ENCODE measurements at regions of chr17 and their contacts with region 1.

Region 1: GRCh38 chr17:32311028-32311536 is 30.9 kb downstream of the C17orf75 start:
- DNase-seq: no peak
- ATAC-seq: peak; percentile 63; the same call in 1 of the 2 replicates
- H3K4me3 ChIP-seq: no peak overlapping the region
- H3K27ac ChIP-seq: no peak overlapping the region
- H3K4me1 ChIP-seq: 0 out of 2 replicates have a peak, but pooled peaks cover 4% of the 10 kb centered on the region
- H3K27me3 ChIP-seq: no peaks in the 10 kb centered on the region
- CTCF ChIP-seq: no peak

Region 2: GRCh38 chr17:32102172-32102863 is 208.8 kb before region 1 on chr17:
- CTCF ChIA-PET with region 1: interaction called, 11 read pairs
- POLR2A ChIA-PET with region 1: no interaction called
- in situ Hi-C with region 1: no loop called
- intact Hi-C with region 1: no loop called
- DNase-seq: no peak
- ATAC-seq: no peak
- H3K4me3 ChIP-seq: no peak overlapping the region
- H3K27ac ChIP-seq: peak overlapping the region; percentile 67; the same call in 1 of the 2 replicates
- H3K4me1 ChIP-seq: peaks cover 23% of the 10 kb centered on the region
- H3K27me3 ChIP-seq: no peaks in the 10 kb centered on the region
- CTCF ChIP-seq: no peak

Region 3: DNA sequence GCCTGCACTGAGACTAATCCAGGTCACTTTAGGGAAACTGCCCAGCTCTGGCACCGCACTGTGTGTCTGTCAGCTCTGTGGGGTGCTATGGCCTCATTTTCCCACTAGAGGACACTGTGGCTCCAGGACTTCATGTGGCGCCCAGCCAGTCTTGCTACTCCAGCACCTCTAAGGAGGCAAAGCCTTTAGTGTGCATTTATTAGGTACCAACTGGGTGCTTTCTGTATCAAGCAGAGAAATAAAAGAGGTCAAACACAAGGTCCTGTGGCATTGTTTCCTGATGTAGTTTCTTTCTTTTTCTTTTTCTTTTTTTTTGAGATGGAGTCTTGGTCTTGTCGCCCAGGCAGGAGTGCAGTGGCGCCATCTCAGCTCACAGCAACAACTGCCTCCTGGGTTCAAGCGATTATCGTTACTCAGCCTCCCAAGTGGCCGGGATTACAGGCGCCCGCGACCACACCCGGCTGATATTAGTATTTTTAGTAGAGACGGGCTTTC is 57.9 kb before region 1 on chr17:
- CTCF ChIA-PET with region 1: interaction called, 14 read pairs
- POLR2A ChIA-PET with region 1: interaction called, 7 read pairs
- in situ Hi-C with region 1: no loop called
- intact Hi-C with region 1: no loop called
- DNase-seq: peak; percentile 67
- ATAC-seq: peak; percentile 98
- H3K4me3 ChIP-seq: no peak overlapping the region
- H3K27ac ChIP-seq: no peak overlapping the region
- H3K4me1 ChIP-seq: no peaks in the 10 kb centered on the region
- H3K27me3 ChIP-seq: no peaks in the 10 kb centered on the region
- CTCF ChIP-seq: peak; percentile 99

Region 4: DNA sequence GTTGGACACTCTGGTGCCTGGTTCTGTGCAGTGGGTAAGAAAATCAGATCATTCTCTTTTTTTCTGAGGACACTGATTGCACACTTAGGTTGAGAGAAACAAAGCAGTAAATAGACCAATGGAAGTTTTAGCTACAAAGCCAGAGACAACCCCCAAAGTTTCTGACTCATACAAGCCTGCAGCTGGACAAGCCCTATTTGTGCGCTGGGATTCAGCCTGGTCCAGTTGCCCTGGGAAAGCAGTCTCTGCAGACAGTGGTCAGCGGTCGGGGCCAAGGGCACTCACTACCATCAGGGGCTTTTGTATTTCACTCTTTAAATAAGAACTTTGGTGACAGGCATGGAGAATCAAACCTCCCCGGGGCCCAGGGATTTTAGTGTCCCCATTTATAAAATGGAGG is 51.5 kb before region 1 on chr17:
- CTCF ChIA-PET with region 1: interaction called, 14 read pairs
- POLR2A ChIA-PET with region 1: interaction called, 11 read pairs
- in situ Hi-C with region 1: no loop called
- intact Hi-C with region 1: no loop called
- DNase-seq: no peak
- ATAC-seq: no peak
- H3K4me3 ChIP-seq: no peak overlapping the region
- H3K27ac ChIP-seq: no peak overlapping the region
- H3K4me1 ChIP-seq: no peaks in the 10 kb centered on the region
- H3K27me3 ChIP-seq: 0 out of 2 replicates have a peak, but pooled peaks cover 3% of the 10 kb centered on the region
- CTCF ChIP-seq: no peak

Region 5: GRCh38 chr17:32266389-32267301 is 44.4 kb before region 1 on chr17:
- CTCF ChIA-PET with region 1: interaction called, 11 read pairs
- POLR2A ChIA-PET with region 1: no interaction called
- in situ Hi-C with region 1: no loop called
- intact Hi-C with region 1: no loop called
- DNase-seq: no peak
- ATAC-seq: 0 out of 2 replicates have a peak, but pooled peaks have one; percentile 11
- H3K4me3 ChIP-seq: peak overlapping the region; percentile 46 to 47
- H3K27ac ChIP-seq: no peak overlapping the region
- H3K4me1 ChIP-seq: peaks cover 5% of the 10 kb centered on the region
- H3K27me3 ChIP-seq: peaks cover 14% of the 10 kb centered on the region
- CTCF ChIP-seq: no peak